K562 (cell line): ENCODE measurements at regions of chr7 and their contacts with region 1.

Region 1: DNA sequence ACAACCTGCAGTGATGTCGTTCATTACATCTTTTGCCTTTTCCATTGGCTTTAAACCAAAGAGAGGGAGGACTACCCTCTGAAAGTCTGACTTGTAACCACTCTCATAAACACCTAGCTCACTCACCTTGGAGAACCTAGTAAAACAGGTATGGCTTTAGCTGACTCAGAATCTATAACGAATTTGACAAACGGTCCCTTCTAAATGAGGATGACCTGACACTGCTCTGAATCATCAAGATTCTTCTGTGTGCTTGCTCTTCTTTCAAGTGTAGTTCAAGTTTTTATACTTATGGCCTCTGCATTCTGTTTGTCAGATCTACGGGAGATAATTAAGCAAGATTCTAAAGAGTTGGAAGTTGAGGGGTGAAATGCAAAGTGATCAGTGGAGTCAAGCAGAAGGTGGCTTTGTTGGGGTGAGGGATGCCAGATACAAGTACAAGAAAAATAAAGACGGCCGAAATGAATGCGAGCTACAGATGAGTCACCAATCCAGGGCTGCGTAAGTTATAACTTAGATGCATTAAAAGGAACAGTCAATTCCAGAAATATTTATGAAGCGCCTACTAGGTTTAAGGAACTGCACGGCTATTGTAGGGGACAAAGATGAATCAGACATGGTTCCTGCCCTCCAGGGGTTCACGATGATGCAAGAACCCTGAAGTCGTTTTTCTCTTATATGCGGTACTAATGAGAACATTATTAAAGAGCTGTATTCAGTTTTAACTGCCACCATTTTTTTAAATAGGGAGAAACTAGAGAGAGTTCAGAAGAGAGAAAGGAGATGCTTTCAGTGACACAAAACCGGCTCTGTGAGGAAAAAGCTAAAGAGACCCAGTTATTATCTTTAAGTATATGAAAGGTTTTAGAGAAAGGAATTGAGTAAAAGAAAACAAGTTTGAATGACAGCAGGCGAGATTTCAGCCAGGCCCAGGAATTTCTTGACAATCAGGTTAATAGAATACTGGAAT is 6.5 kb downstream of the HIPK2 start:
- DNase-seq: no peak
- ATAC-seq: no peak
- H3K4me3 ChIP-seq: no peak overlapping the region
- H3K27ac ChIP-seq: no peak overlapping the region
- H3K4me1 ChIP-seq: peaks cover 3 to 8% of the 10 kb centered on the region in 2 experiments; a peak in 4 of 5 replicates
- H3K27me3 ChIP-seq: no peaks in the 10 kb centered on the region; a peak in 1 of 5 replicates
- CTCF ChIP-seq: no peak
- EP300 ChIP-seq: no peak
- POLR2A ChIP-seq: no peak
- RAD21 ChIP-seq: no peak

Region 2: DNA sequence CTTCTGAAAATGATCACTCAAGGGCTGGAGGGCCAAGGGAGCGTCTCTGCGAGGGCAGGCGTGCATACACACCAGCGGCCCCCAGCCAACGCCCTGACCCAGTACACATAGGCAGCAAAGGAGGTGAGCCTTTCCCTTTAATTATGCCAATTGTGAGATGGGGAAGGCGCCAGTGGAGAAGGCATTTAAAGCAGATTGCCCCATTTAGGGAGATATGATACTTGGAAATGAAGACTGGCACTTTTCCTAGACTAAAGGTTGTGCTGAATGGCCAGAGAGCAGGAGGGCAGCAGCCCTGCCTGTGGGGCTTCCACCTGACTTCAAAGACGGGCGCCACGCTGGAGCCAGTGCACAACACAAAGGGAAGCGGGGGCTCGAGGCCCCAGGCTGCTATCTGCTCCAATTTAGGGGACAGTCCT is 17.6 kb before region 1 on chr7:
- CTCF ChIA-PET with region 1: no interaction called
- POLR2A ChIA-PET with region 1: interaction called, 10 read pairs
- in situ Hi-C with region 1: no loop called
- intact Hi-C with region 1: no loop called
- DNase-seq: no peak
- ATAC-seq: no peak
- H3K4me3 ChIP-seq: no peak overlapping the region
- H3K27ac ChIP-seq: no peak overlapping the region
- H3K4me1 ChIP-seq: no peaks in the 10 kb centered on the region; a peak in 2 of 5 replicates
- H3K27me3 ChIP-seq: peaks cover 0 to 9% of the 10 kb centered on the region in 2 experiments; a peak in 1 of 5 replicates
- CTCF ChIP-seq: no peak
- EP300 ChIP-seq: no peak
- POLR2A ChIP-seq: no peak
- RAD21 ChIP-seq: no peak